OCI-LY7 (cell line): ENCODE measurements at regions of chr6 and their contacts with region 1.

Region 1: GRCh38 chr6:119147101-119148053 is 68.9 kb upstream of the FAM184A start:
- DNase-seq: peak; percentile 21
- H3K4me3 ChIP-seq: no peak overlapping the region
- H3K27ac ChIP-seq: no peak overlapping the region
- H3K4me1 ChIP-seq: peaks cover 6% of the 10 kb centered on the region
- CTCF ChIP-seq: no peak

Region 2: GRCh38 chr6:119966486-119966885 is 819.1 kb after region 1 on chr6:
- CTCF ChIA-PET with region 1: no interaction called
- POLR2A ChIA-PET with region 1: no interaction called
- intact Hi-C with region 1: loop called (anchors 5 kb)
- DNase-seq: peak; percentile 66
- H3K4me3 ChIP-seq: no peak overlapping the region
- H3K27ac ChIP-seq: no peak overlapping the region
- H3K4me1 ChIP-seq: no peaks in the 10 kb centered on the region
- CTCF ChIP-seq: peak; percentile 78

Region 3: GRCh38 chr6:120378582-120379220 is 1231.3 kb after region 1 on chr6:
- CTCF ChIA-PET with region 1: no interaction called
- POLR2A ChIA-PET with region 1: no interaction called
- intact Hi-C with region 1: loop called (anchors 5 kb)
- DNase-seq: peak; percentile 64
- H3K4me3 ChIP-seq: no peak overlapping the region
- H3K27ac ChIP-seq: no peak overlapping the region
- H3K4me1 ChIP-seq: no peaks in the 10 kb centered on the region
- CTCF ChIP-seq: peak; percentile 98